ENCODE measurements at regions of chr6 and their contacts with region 1.

Region 1: DNA sequence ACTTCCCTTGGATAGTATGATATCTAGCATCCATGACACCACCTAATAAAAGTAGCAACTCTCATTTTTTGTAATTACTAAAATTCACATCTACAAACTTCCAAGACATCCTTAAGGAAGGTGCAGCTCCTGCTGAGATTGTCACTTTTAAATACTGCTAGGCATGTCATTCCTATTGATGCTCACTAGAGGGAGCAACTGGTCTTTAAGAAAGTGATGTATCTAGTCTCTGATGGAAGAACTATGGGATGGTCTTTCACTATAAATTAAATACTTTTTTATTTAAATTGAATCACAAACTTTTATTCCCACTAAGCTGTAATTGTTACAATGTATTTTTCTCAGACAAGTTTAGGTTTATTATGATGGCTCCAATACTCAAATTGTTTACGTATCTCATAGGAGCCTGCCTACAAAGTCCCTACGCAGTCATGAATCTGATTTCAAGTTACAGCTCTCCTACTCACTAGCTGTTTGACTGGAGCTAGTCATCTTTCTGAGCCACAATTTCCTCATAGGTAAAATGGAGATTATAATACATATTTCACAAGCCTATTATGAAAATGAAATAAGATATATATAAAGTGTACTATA is 8.1 kb upstream of the TSPYL1 start:
- DNase-seq: peak; percentile 65
- H3K4me3 ChIP-seq: no peak overlapping the region
- H3K27ac ChIP-seq: no peak overlapping the region
- H3K4me1 ChIP-seq: no peaks in the 10 kb centered on the region
- H3K27me3 ChIP-seq: no peaks in the 10 kb centered on the region
- CTCF ChIP-seq: peak; percentile 57
- POLR2A ChIP-seq: no peak

Region 2: DNA sequence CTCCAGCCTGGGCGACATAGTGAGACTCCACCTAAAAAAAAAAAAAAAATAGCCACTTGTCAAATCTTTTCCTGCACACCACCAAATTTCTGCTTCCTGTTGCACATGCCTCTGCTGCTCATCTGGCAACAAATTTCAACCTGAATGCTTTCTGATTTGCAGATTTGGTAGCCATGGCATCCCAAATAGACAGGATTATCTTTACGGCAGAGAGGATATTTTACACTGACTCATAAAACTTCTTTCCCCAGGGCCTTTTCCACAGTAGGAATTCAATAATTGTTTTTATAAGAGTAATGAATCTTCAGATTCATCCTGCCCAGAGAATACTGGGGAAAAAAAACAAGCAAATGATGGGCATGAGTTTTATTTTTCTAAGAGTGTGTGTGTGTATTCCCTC is 491.7 kb before region 1 on chr6:
- CTCF ChIA-PET with region 1: no interaction called
- POLR2A ChIA-PET with region 1: no interaction called
- dilution Hi-C with region 1: no loop called
- intact Hi-C with region 1: no loop called
- DNase-seq: no peak
- H3K4me3 ChIP-seq: no peak overlapping the region
- H3K27ac ChIP-seq: no peak overlapping the region
- H3K4me1 ChIP-seq: no peaks in the 10 kb centered on the region
- H3K27me3 ChIP-seq: no peaks in the 10 kb centered on the region
- CTCF ChIP-seq: no peak
- POLR2A ChIP-seq: no peak

Region 3: GRCh38 chr6:116034327-116034726 is 253.5 kb before region 1 on chr6:
- CTCF ChIA-PET with region 1: no interaction called
- POLR2A ChIA-PET with region 1: no interaction called
- dilution Hi-C with region 1: no loop called
- intact Hi-C with region 1: no loop called
- DNase-seq: peak; percentile 36
- H3K4me3 ChIP-seq: no peak overlapping the region
- H3K27ac ChIP-seq: no peak overlapping the region
- H3K4me1 ChIP-seq: no peaks in the 10 kb centered on the region
- H3K27me3 ChIP-seq: no peaks in the 10 kb centered on the region
- CTCF ChIP-seq: no peak
- POLR2A ChIP-seq: no peak

Region 4: DNA sequence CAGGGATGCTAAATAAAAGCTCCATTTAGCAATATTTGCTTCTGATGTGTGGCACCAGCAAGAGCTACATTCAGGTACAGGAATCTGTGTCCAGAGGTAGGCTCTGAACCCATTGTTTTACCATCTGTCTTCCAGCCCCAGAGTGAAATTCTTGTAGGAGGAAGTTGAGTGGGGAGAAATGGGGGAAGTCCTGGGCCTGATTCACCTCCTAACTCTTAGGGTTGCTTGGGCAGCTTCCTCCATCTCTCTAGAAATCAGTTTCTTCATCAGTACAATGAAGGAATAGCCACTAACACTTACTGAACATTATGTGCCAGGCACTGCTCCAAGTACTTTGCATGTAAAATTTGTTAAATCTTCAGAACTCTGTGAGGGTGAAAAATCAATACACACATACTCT is 27.1 kb after region 1 on chr6:
- CTCF ChIA-PET with region 1: interaction called, 10 read pairs
- POLR2A ChIA-PET with region 1: no interaction called
- dilution Hi-C with region 1: no loop called
- intact Hi-C with region 1: no loop called
- DNase-seq: peak; percentile 62
- H3K4me3 ChIP-seq: no peak overlapping the region
- H3K27ac ChIP-seq: peak overlapping the region; percentile 29
- H3K4me1 ChIP-seq: peaks cover 18% of the 10 kb centered on the region
- H3K27me3 ChIP-seq: no peaks in the 10 kb centered on the region
- CTCF ChIP-seq: no peak
- POLR2A ChIP-seq: no peak

Region 5: GRCh38 chr6:116338943-116339342 is 51.2 kb after region 1 on chr6:
- CTCF ChIA-PET with region 1: no interaction called
- POLR2A ChIA-PET with region 1: no interaction called
- dilution Hi-C with region 1: no loop called
- intact Hi-C with region 1: no loop called
- DNase-seq: no peak
- H3K4me3 ChIP-seq: no peak overlapping the region
- H3K27ac ChIP-seq: no peak overlapping the region
- H3K4me1 ChIP-seq: no peaks in the 10 kb centered on the region
- H3K27me3 ChIP-seq: no peaks in the 10 kb centered on the region
- CTCF ChIP-seq: no peak
- POLR2A ChIP-seq: no peak

Region 6: GRCh38 chr6:116444092-116444491 is 156.3 kb after region 1 on chr6:
- CTCF ChIA-PET with region 1: interaction called, 36 read pairs
- POLR2A ChIA-PET with region 1: no interaction called
- dilution Hi-C with region 1: no loop called
- intact Hi-C with region 1: loop called (anchors 5 kb)
- DNase-seq: peak; percentile 44
- H3K4me3 ChIP-seq: no peak overlapping the region
- H3K27ac ChIP-seq: no peak overlapping the region
- H3K4me1 ChIP-seq: peaks cover 3% of the 10 kb centered on the region
- H3K27me3 ChIP-seq: no peaks in the 10 kb centered on the region
- CTCF ChIP-seq: peak; percentile 31 to 48
- POLR2A ChIP-seq: no peak

Region 7: DNA sequence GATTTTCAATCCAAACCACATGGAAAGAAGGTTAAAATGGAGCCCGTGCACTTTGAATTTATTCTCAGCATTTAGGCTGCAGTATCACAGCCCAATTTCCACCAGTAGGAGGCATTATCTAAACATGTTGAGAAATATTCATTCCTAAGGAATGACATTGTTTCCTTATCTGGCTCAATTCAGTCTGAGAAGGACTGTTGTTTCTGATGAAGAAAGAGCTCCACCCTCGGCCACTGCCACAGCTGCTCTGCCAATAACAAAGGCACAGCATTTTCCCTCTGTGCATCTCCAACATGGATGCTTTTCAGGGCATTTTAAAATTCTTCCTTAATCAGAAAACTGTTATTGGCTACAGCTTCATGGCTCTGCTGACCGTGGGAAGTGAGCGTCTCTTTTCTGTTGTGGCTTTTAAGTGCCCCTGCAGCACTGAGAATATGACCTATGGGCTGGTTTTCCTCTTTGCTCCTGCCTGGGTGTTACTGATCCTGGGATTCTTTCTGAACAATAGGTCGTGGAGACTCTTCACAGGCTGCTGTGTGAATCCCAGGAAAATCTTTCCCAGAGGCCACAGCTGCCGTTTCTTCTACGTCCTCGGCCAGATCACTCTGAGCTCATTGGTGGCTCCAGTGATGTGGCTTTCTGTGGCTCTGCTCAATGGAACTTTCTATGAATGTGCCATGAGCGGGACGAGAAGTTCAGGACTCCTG is 223.8 kb after region 1 on chr6 and contains the start of gene CALHM5:
- CTCF ChIA-PET with region 1: interaction called, 33 read pairs
- POLR2A ChIA-PET with region 1: interaction called, 3 read pairs
- dilution Hi-C with region 1: no loop called
- intact Hi-C with region 1: loop called (anchors 1 kb)
- DNase-seq: peak; percentile 91
- H3K4me3 ChIP-seq: peak within 1 kb of the TSS; percentile 26 to 82 (median 35)
- H3K27ac ChIP-seq: peak within 1 kb of the TSS; percentile 95
- H3K4me1 ChIP-seq: peaks cover 19% of the 10 kb centered on the region
- H3K27me3 ChIP-seq: no peaks in the 10 kb centered on the region
- CTCF ChIP-seq: peak; percentile 55 to 67
- POLR2A ChIP-seq: peak; percentile 67
- total RNA-seq, gene CALHM5: 6.6 and 7.1 TPM in 2 replicates

Region 8: DNA sequence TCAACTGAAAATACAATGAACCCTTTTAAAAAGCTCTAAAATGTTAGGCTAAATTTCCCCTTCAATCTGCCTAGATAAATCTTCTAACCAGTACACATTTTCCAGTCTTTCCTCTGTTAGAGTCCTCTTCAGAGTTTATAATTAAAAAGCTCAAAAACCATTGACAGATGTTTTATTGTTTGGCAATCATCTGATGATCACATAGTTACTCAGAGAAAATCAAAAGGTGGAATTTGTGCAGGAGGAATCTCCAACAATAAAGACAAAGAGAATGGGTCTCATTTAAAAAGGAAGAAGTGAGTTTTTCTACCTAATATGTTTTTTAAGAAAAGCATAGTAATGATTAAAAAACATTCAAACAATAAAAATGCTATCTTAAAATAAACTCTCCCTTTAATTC is 254.6 kb after region 1 on chr6:
- CTCF ChIA-PET with region 1: interaction called, 13 read pairs
- POLR2A ChIA-PET with region 1: no interaction called
- dilution Hi-C with region 1: no loop called
- intact Hi-C with region 1: no loop called
- DNase-seq: no peak
- H3K4me3 ChIP-seq: no peak overlapping the region
- H3K27ac ChIP-seq: no peak overlapping the region
- H3K4me1 ChIP-seq: no peaks in the 10 kb centered on the region
- H3K27me3 ChIP-seq: no peaks in the 10 kb centered on the region
- CTCF ChIP-seq: no peak
- POLR2A ChIP-seq: no peak

Region 9: GRCh38 chr6:116648156-116648555 is 360.4 kb after region 1 on chr6:
- CTCF ChIA-PET with region 1: interaction called, 15 read pairs
- POLR2A ChIA-PET with region 1: no interaction called
- dilution Hi-C with region 1: no loop called
- intact Hi-C with region 1: no loop called
- DNase-seq: peak; percentile 93
- H3K4me3 ChIP-seq: peak overlapping the region in 1 of 3 experiments; percentile 42
- H3K27ac ChIP-seq: peak overlapping the region; percentile 36
- H3K4me1 ChIP-seq: peaks cover 24% of the 10 kb centered on the region
- H3K27me3 ChIP-seq: no peaks in the 10 kb centered on the region
- CTCF ChIP-seq: no peak
- POLR2A ChIP-seq: peak; percentile 66

Measured in endothelial cell of umbilical vein (primary cell).